Aorta (tissue), 5 donors: ENCODE measurements at regions of chr17 and their contacts with region 1.

Region 1: GRCh38 chr17:65100316-65101140 is 36.6 kb upstream of the RGS9 start:
- DNase-seq: peak; percentile 92 to 95
- ATAC-seq: peak; percentile 98
- H3K4me3 ChIP-seq: peak overlapping the region; percentile 37 to 40
- H3K27ac ChIP-seq: no peak overlapping the region
- H3K4me1 ChIP-seq: no peaks in the 10 kb centered on the region
- H3K27me3 ChIP-seq: no peaks in the 10 kb centered on the region

Region 2: DNA sequence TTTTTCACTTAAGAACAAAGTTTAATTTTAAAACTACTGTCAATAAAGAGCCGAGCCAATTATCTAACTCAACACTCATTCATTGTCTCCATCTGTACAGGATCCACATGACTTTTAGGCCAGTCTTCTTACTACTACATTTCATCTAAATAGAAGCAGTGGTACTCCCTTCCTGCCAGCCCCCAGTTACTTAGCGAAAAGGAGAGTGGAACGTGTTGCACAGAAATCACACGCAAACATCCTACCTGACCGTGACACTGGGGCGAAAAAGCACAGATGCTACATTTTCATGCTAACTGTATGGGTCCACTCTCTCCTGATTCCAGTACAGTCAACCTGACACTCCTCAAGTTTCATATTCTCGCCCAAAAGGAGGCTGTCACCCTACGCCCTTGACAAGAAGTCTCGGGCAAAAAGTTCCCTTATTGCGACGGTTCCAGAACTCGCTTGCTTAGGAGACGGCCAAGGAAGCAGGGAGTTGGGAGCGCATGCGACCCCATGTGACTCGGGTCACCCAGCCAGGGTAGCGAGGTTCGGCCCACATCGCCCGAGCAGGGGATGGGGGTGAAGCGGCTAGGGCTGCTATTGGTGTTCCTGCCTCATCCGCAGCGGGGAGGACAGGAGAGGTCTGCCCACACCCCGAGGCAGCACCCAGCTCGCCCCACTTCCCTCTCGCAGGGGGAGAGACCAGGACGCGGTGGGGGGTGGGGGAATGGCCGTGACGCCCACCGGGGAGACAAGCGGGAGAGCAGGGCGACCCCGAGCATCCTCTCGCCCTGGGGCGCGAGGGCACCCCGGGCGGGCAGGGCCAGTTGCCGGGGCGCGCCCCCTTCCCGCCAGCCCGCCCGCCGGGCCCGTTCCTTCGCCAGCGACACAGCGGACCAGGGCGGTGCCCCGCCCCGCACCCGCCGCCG is 44.9 kb before region 1 on chr17:
- intact Hi-C with region 1: loop called in 1 of 2 experiments (anchors 5 kb)
- DNase-seq: peak; percentile 84 to 86
- ATAC-seq: peak; percentile 80
- H3K4me3 ChIP-seq: peak overlapping the region; percentile 75 to 96
- H3K27ac ChIP-seq: peak overlapping the region; percentile 23 to 99
- H3K4me1 ChIP-seq: peaks cover 2 to 4% of the 10 kb centered on the region in 2 donors
- H3K27me3 ChIP-seq: no peaks in the 10 kb centered on the region

Region 3: GRCh38 chr17:65137021-65137991 is 36.8 kb after region 1 on chr17 and contains the start of gene RGS9:
- intact Hi-C with region 1: no loop called
- DNase-seq: peak; percentile 90 to 95
- ATAC-seq: peak; percentile 96
- H3K4me3 ChIP-seq: peak within 1 kb of the TSS; percentile 33 to 48
- H3K27ac ChIP-seq: no peak within 1 kb of the TSS
- H3K4me1 ChIP-seq: no peaks in the 10 kb centered on the region
- H3K27me3 ChIP-seq: no peaks in the 10 kb centered on the region
- total RNA-seq, gene RGS9: 3.0 to 7.1 TPM